Left lung (tissue), 14 donors: ENCODE measurements at regions of chr5 and their contacts with region 1.

Region 1: GRCh38 chr5:172714491-172715421 is 56.2 kb downstream of the DUSP1 start:
- DNase-seq: peak in 3 of 4 donors; percentile 68 to 88 (median 86)
- ATAC-seq: peak; percentile 81
- H3K4me3 ChIP-seq: no peak overlapping the region
- H3K27ac ChIP-seq: peak overlapping the region; percentile 67 to 75
- H3K4me1 ChIP-seq: peaks cover 21 to 51% of the 10 kb centered on the region in 2 donors
- H3K27me3 ChIP-seq: no peaks in the 10 kb centered on the region
- CTCF ChIP-seq: peak; percentile 89 to 94

Region 2: DNA sequence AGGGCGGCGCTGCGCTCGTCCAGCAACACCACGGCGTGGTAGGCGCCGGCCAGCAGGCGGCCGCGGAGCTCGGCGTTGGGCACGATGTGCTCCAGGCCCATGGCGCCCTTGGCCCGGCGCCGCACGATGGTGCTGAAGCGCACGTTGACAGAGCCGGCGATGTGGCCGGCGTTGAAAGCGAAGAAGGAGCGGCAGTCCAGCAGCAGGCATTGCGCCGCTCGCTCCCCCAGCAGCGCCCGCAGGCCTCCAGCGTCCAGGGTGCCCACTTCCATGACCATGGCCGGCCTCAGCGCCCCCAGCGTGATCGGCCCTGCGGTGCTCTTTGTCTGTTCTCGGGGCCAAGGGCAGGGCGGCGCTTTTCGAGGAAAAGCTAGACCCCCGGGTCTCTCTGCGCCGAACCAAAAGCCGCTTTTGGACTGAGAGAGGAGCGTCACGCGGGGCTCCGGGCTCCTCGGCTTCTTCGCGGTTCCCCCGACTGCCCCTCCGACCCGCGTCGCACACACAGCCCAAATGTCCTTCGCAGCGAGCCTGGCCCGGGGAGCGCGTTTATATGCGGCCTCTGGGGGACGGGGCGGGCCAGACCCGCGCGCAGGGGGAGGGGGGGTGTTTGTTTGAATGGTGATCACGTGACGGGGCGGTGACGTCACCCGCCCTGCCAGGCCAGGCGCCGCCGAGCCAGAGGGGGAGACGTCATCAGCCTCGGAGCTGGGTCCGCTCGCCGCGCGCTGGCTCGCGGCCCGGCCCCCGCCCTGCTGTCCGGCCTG is 56.1 kb after region 1 on chr5 and contains the start of gene DUSP1:
- intact Hi-C with region 1: loop called in 1 of 2 experiments (anchors 10 kb)
- DNase-seq: peak; percentile 97 to 100 (median 99)
- ATAC-seq: peak; percentile 56
- H3K4me3 ChIP-seq: peak within 1 kb of the TSS; percentile 64 to 93
- H3K27ac ChIP-seq: peak within 1 kb of the TSS; percentile 100
- H3K4me1 ChIP-seq: peaks cover 48 to 83% of the 10 kb centered on the region in 2 donors
- H3K27me3 ChIP-seq: no peaks in the 10 kb centered on the region
- CTCF ChIP-seq: peak; percentile 9 to 57
- polyA plus RNA-seq, gene DUSP1: 33.0 to 534 (median 245) TPM

Region 3: DNA sequence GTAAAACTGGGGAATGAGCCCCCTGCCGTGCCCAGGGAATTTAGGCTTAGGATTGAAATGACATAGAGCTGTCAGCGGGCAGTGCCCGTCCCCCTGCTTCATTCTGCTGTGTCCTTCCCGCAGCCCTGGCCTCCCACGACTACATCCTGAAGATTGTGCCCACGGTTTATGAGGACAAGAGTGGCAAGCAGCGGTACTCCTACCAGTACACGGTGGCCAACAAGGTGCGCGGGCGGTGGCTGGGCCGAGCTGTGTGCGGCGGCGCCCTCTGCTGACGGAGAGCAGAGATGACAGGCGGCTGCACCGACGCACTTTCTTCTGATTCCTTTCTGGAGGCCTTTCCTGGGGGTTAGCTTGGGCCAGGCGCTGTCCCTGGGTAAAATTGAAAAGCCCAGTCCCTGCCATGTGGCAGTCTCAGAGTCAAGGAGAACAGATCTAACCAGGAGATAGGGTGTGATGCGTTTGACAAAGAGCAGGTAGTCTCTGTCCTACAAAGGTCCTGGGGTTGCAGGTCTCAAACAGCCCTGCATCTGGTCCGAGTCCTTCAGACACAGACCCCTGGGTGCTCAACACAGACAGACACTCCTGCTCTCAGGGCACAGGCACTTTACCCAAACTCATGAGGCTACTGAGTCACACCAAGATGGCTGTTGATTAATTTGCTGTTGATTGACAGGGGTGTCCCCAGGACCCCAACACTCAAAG is 217.7 kb after region 1 on chr5:
- intact Hi-C with region 1: loop called in 1 of 2 experiments (anchors 5 kb)
- DNase-seq: peak; percentile 37 to 96 (median 70)
- ATAC-seq: peak; percentile 98
- H3K4me3 ChIP-seq: no peak overlapping the region
- H3K27ac ChIP-seq: peak overlapping the region; percentile 34 to 57
- H3K4me1 ChIP-seq: peaks cover 5 to 24% of the 10 kb centered on the region in 2 donors
- H3K27me3 ChIP-seq: no peaks in the 10 kb centered on the region
- CTCF ChIP-seq: peak; percentile 91

Region 4: GRCh38 chr5:172943283-172943841 is 228.6 kb after region 1 on chr5:
- intact Hi-C with region 1: loop called in 1 of 2 experiments (anchors 10 kb)
- DNase-seq: peak in 1 of 4 donors; percentile 49
- ATAC-seq: peak; percentile 22
- H3K4me3 ChIP-seq: no peak overlapping the region
- H3K27ac ChIP-seq: peak overlapping the region in 1 of 2 donors; percentile 20
- H3K4me1 ChIP-seq: no peaks in the 10 kb centered on the region
- H3K27me3 ChIP-seq: no peaks in the 10 kb centered on the region
- CTCF ChIP-seq: no peak